Naive thymus-derived CD4-positive, alpha-beta T cell (primary cell): ENCODE measurements at regions of chr6 and their contacts with region 1.

Region 1: DNA sequence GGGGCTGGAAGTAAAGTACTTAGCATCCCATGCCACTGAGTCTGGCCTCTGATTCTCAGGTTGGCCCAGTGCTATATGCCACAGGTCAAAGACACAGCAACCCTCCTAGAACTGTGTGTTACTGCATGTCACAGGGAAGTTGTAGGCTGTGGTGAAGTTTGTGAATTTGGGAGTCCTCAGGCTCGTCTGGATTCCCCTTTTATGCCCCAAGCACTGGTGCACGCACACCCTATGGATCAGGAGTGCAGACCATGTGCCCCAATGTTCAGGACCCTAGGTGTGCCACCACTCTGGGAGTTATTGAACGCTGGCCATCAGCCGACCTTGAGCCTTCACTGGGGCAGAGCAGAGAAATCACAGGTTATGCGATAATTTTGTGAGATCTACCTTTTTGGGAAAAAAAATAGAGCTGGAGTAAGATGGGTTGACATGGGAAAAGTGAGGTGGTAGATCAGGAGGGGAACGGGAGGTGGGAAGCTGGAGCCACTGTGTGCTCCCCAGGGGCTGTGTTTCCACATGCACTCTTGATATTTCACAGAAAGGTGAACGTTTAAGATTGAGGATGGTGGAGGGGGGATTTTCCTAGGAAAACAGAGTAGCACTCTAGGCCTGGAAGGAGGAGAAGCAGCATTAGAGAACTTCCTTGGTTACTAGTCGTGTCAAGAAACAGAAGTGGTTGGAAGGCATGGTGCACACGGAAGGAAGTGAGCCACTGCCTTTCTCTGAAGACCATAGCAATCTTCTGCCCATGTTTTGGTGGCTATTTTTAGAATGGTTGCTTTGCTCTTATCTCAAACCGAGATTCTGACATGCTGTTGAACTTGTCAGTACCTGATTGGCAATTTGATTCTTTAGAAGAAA is 44.1 kb downstream of the DUSP22 start:
- DNase-seq: peak in 2 of 9 donors; percentile 13 to 18
- ATAC-seq: peak; percentile 58
- H3K4me3 ChIP-seq: no peak overlapping the region
- H3K4me3 Mint-ChIP-seq: peak overlapping the region; percentile 2 to 74 (median 42)
- H3K27ac ChIP-seq: no peak overlapping the region
- H3K27ac Mint-ChIP-seq: peak overlapping the region in 7 of 9 donors; percentile 18 to 87 (median 60)
- H3K4me1 ChIP-seq: peaks cover 21 to 28% of the 10 kb centered on the region in 2 donors
- H3K4me1 Mint-ChIP-seq: peaks cover 28 to 54% (median 52%) of the 10 kb centered on the region in 7 donors
- H3K27me3 ChIP-seq: no peaks in the 10 kb centered on the region
- H3K27me3 Mint-ChIP-seq: no peaks in the 10 kb centered on the region

Region 2: DNA sequence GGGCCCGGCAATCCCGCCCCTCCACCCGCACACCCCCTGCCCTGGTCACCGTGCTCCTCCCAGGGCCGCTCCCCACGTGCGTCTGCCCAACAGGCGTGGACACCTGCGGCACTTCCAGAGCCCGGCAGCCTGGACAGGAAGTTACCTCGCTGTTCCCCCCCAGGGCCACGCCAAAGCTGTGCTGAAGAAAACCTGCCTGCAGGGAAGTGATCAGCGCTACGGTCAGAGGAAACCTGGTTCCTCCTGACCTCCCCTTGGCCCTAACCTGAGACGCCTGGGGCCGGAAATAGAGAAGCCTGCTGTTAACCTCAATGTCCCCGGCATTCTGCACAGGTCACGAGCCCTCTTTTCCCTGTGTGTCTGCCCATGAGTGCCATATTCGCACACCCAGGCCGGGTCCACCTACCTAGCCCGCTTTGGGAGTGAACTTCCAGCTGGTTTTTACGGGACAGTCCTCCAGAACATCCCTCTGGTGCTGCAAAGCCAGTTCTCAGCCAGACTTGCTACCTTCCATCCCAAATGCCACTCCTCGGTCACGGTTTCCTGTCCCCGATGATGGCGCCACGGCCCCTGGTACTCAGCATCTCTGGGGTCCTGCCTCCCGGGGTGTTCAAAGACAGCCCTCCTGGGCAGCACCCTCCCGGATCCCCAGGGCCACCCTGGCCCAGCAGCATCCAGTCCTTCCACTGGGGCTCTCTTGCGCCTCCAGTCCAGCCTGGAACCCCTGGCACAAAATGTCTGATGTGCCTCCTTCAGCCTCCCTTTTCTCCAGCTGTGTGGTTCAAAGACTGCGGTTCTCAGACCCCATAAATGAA is 43.2 kb after region 1 on chr6:
- CTCF ChIA-PET with region 1: no interaction called
- POLR2A ChIA-PET with region 1: no interaction called
- intact Hi-C with region 1: loop called in 1 of 2 experiments (anchors 5 kb)
- DNase-seq: no peak
- ATAC-seq: peak; percentile 25
- H3K4me3 ChIP-seq: no peak overlapping the region
- H3K4me3 Mint-ChIP-seq: peak overlapping the region in 1 of 10 donors; percentile 3
- H3K27ac ChIP-seq: no peak overlapping the region
- H3K27ac Mint-ChIP-seq: no peak overlapping the region
- H3K4me1 ChIP-seq: no peaks in the 10 kb centered on the region
- H3K4me1 Mint-ChIP-seq: peaks cover 5 to 20% (median 9%) of the 10 kb centered on the region in 7 donors
- H3K27me3 ChIP-seq: no peaks in the 10 kb centered on the region
- H3K27me3 Mint-ChIP-seq: peaks cover 11 to 57% (median 29%) of the 10 kb centered on the region in 5 donors